Caco-2 (cell line): ENCODE measurements at regions of chr20 and their contacts with region 1.

Region 1: GRCh38 chr20:37081717-37082289 is 14.0 kb downstream of the RBL1 start:
- DNase-seq: peak; percentile 34 to 41
- H3K4me3 ChIP-seq: no peak overlapping the region
- H3K4me3 Mint-ChIP-seq: no peak overlapping the region
- H3K27ac Mint-ChIP-seq: no peak overlapping the region
- H3K4me1 ChIP-seq: no peaks in the 10 kb centered on the region
- H3K4me1 Mint-ChIP-seq: no peaks in the 10 kb centered on the region
- H3K27me3 ChIP-seq: no peaks in the 10 kb centered on the region
- H3K27me3 Mint-ChIP-seq: no peaks in the 10 kb centered on the region
- CTCF ChIP-seq: peak; percentile 62 to 65

Region 2: DNA sequence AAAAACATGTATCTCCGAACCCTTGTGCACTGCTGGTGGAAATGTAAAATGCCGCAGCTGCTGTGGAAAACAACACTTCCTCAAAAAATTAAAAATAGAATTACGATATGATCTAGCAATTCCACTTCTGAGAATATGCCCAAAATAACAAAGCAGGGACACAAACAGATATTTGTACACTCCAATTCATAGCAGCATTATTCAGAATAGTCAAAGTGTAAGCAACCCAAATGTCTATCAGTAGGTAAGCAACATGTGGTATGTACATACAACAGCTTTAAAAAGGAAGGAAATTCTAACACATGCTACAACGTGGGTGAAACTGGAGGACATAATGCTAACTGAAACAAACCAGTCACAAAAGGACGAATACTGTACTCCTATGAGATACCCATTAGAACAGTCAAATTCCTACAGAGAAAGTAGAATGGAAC is 481.9 kb before region 1 on chr20:
- CTCF ChIA-PET with region 1: no interaction called
- POLR2A ChIA-PET with region 1: no interaction called
- intact Hi-C with region 1: no loop called
- DNase-seq: no peak
- H3K4me3 ChIP-seq: no peak overlapping the region
- H3K4me3 Mint-ChIP-seq: no peak overlapping the region
- H3K27ac Mint-ChIP-seq: no peak overlapping the region
- H3K4me1 ChIP-seq: peaks cover 2% of the 10 kb centered on the region
- H3K4me1 Mint-ChIP-seq: no peaks in the 10 kb centered on the region
- H3K27me3 ChIP-seq: no peaks in the 10 kb centered on the region
- H3K27me3 Mint-ChIP-seq: no peaks in the 10 kb centered on the region
- CTCF ChIP-seq: no peak

Region 3: DNA sequence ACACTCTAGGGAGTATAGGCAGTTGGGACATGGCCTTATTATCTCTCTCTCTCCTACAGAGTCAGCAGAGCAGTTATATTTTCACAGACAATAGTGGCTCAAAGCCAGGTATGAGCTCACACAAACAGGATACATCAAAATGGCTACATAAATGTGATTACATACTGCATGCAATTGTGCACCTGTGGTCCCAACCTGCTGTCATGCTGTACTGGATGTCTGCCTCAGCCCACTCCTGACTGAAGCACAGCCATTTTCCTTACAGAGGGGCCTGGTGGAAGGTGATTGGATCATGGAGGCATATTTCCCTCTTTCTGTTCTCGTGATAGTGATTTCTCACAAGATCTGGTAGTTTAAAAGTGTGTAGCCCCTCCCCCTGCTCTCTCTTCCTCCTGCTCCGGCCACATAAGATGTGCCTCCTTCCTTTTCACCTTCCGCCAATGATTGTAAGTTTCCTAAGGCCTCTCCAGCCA is 93.3 kb before region 1 on chr20:
- CTCF ChIA-PET with region 1: no interaction called
- POLR2A ChIA-PET with region 1: no interaction called
- intact Hi-C with region 1: no loop called
- DNase-seq: no peak
- H3K4me3 ChIP-seq: no peak overlapping the region
- H3K4me3 Mint-ChIP-seq: no peak overlapping the region
- H3K27ac Mint-ChIP-seq: no peak overlapping the region
- H3K4me1 ChIP-seq: no peaks in the 10 kb centered on the region
- H3K4me1 Mint-ChIP-seq: no peaks in the 10 kb centered on the region
- H3K27me3 ChIP-seq: no peaks in the 10 kb centered on the region
- H3K27me3 Mint-ChIP-seq: no peaks in the 10 kb centered on the region
- CTCF ChIP-seq: no peak

Region 4: GRCh38 chr20:37007898-37008649 is 73.7 kb before region 1 on chr20:
- CTCF ChIA-PET with region 1: interaction called, 9 read pairs
- POLR2A ChIA-PET with region 1: no interaction called
- intact Hi-C with region 1: loop called (anchors 1 kb)
- DNase-seq: peak; percentile 42
- H3K4me3 ChIP-seq: no peak overlapping the region
- H3K4me3 Mint-ChIP-seq: no peak overlapping the region
- H3K27ac Mint-ChIP-seq: no peak overlapping the region
- H3K4me1 ChIP-seq: no peaks in the 10 kb centered on the region
- H3K4me1 Mint-ChIP-seq: no peaks in the 10 kb centered on the region
- H3K27me3 ChIP-seq: no peaks in the 10 kb centered on the region
- H3K27me3 Mint-ChIP-seq: no peaks in the 10 kb centered on the region
- CTCF ChIP-seq: peak; percentile 29 to 42